ENCODE measurements at regions of chr16 and their contacts with region 1.

Region 1: DNA sequence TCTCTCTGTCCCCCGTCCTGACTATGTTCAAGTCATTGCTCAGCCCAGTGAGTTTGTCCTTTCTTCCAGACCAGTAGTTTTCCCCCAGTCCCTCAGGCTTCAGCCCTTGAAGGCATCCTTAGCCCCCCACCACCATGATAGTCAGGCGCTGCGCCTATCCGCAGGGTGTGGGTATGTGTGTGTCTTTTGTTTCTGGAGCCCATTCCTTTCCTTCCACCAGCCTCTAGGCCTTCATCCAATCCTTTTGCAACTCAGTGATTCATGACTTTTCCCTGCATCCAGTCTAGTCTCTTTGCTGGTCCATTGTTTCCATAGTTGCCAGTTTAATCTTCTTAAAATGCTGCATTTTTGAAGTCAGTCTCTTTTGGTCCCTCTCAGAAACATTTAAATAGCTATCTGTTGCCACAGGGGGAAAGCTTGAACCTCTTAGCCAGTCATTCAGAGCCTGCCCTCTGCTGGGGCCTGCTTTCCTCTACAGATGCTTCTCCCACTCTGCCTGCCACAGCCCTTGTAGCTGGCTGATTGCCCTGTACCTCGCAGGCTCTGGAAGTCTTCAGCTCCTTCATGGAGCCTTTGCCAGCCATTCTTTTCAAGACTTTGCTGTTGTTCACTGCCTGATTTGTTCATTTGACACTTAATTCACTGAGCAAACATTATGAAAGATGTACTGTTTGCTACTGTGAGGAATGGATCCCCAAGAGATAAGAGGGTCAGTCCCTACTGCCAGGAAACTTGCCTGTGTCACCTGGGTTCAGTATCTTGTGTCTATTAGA is 55.9 kb upstream of the ADCY7 start:
- DNase-seq: peak; percentile 84
- H3K4me3 Mint-ChIP-seq: no peak overlapping the region
- H3K27ac Mint-ChIP-seq: no peak overlapping the region
- H3K4me1 Mint-ChIP-seq: peaks cover 29% of the 10 kb centered on the region
- H3K27me3 Mint-ChIP-seq: no peaks in the 10 kb centered on the region

Region 2: DNA sequence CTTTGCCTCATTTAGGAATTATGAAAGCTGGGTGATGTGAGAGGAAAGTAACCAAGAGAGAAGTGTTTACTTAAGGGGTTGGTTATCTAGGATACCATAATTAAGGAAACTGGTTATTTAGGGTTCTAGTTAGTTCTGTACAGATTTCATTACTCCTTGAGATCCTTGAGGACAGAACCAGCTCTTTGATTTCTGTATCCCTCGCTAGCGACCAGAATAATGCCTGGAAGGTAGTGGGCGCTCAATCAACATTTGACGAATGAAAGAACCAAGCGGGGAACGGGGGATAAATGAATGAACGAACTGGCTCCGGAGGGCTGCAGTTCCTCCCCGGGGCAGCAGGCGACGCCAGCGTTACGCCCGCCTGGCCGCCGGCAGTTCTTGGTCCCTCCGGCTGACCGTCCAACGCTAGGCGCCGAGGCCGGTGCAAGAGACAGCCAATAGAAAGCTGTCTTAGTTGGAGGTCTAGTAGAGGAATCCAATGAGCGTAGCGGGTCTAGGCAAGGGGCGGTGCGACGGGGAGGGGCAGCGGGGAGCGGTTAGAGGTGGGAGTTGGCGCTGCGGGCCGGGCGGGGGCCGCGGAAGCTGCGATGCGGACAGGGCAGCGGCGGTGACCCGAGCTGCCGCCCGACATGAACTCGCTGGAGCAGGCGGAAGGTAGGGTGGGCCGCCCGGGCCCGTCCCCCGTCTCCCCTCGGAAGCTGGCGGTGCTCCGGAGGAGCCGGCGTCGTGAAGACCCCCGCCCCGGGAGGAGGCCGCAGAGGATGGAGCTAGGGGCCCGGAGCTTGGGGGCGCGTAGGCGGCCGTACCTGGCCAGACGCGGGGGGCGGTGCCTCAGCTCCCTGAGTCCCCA is 185.5 kb before region 1 on chr16 and contains the start of gene CNEP1R1:
- CTCF ChIA-PET with region 1: interaction called, 133 read pairs
- DNase-seq: peak; percentile 94
- H3K4me3 Mint-ChIP-seq: peak within 1 kb of the TSS; percentile 88
- H3K27ac Mint-ChIP-seq: peak within 1 kb of the TSS; percentile 92
- H3K4me1 Mint-ChIP-seq: peaks cover 24% of the 10 kb centered on the region
- H3K27me3 Mint-ChIP-seq: no peaks in the 10 kb centered on the region

Region 3: GRCh38 chr16:50065624-50066481 is 144.6 kb before region 1 on chr16 and contains the start of gene HEATR3:
- CTCF ChIA-PET with region 1: interaction called, 180 read pairs
- DNase-seq: peak; percentile 95
- H3K4me3 Mint-ChIP-seq: peak within 1 kb of the TSS; percentile 91
- H3K27ac Mint-ChIP-seq: peak within 1 kb of the TSS; percentile 96
- H3K4me1 Mint-ChIP-seq: peaks cover 46% of the 10 kb centered on the region
- H3K27me3 Mint-ChIP-seq: no peaks in the 10 kb centered on the region

Region 4: GRCh38 chr16:50152807-50153452 is 57.5 kb before region 1 on chr16 and contains the start of gene TENT4B:
- CTCF ChIA-PET with region 1: interaction called, 11 read pairs
- DNase-seq: peak; percentile 92
- H3K4me3 Mint-ChIP-seq: peak within 1 kb of the TSS; percentile 84
- H3K27ac Mint-ChIP-seq: peak within 1 kb of the TSS; percentile 96
- H3K4me1 Mint-ChIP-seq: peaks cover 43% of the 10 kb centered on the region
- H3K27me3 Mint-ChIP-seq: no peaks in the 10 kb centered on the region

Region 5: DNA sequence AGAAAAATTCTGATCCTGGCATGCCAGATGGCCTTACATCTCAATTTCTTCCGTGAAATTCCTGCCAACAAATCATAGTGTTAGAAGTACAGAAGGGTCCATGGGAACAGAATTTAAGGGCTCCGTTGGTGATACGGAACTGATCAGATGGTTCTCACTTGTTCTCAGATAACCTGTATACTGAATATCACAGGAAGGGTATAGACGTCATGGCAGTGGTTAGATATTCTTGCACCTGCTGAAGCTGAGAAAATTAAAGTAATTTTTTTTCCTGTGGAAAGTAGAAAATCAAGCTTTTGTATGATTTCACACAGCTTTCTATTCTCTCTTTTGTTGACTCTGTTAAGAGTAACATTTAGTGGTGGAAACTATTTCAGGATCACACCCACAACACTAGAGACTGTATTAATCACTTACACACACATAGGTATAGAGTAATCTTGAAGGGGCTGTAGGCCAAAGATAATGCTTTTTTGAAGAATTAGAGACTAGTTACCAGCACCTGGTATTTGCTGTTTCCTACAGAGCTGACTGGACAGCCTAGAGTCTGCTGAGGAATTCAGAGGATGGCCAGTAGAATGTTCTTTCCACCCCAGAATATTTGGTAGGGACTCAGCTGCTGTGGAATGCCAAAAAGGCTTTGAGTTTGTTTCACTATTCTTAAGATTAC is 49.8 kb before region 1 on chr16:
- CTCF ChIA-PET with region 1: interaction called, 13 read pairs
- DNase-seq: no peak
- H3K4me3 Mint-ChIP-seq: no peak overlapping the region
- H3K27ac Mint-ChIP-seq: peak overlapping the region; percentile 37
- H3K4me1 Mint-ChIP-seq: peaks cover 67% of the 10 kb centered on the region
- H3K27me3 Mint-ChIP-seq: no peaks in the 10 kb centered on the region

Region 6: GRCh38 chr16:50290031-50290775 is 79.8 kb after region 1 on chr16:
- CTCF ChIA-PET with region 1: no interaction called
- DNase-seq: no peak
- H3K4me3 Mint-ChIP-seq: no peak overlapping the region
- H3K27ac Mint-ChIP-seq: peak overlapping the region; percentile 34
- H3K4me1 Mint-ChIP-seq: peaks cover 14% of the 10 kb centered on the region
- H3K27me3 Mint-ChIP-seq: no peaks in the 10 kb centered on the region

Region 7: GRCh38 chr16:50354629-50355456 is 144.4 kb after region 1 on chr16:
- CTCF ChIA-PET with region 1: interaction called, 64 read pairs
- DNase-seq: no peak
- H3K4me3 Mint-ChIP-seq: no peak overlapping the region
- H3K27ac Mint-ChIP-seq: peak overlapping the region; percentile 60
- H3K4me1 Mint-ChIP-seq: peaks cover 22% of the 10 kb centered on the region
- H3K27me3 Mint-ChIP-seq: no peaks in the 10 kb centered on the region

Region 8: DNA sequence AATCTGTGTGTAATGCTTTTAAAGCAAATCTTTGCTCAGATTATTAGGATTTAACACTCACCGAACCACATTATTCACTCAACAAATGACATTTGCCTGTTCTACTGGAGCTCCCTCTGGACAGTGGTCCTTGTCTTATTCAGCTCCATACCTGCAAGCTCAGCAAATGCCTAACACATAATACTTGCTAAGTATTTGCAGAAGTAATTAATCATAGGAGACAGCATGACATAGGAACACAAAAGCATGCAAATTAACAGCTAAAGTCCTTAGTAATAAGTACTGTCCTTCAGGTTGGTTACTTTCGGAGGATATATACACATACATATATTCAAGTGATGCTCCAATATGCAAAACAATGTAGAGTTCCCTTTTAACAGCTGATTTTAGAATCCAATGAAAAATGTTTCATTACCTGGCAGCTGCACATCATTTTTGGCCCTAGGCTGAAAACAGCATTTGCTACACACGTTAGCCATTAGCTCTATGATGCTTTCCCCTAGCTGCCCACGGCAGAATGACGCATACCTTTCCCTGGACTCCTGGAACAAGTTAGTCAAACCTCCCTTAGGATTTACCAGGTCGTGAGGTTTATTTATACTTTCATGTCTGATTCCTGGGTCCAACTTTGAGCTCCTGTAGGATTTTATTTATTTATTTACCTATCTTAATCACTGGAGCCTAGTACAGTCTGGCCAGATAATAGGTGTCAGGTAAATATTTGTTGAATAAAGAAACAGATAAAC is 149.8 kb after region 1 on chr16:
- CTCF ChIA-PET with region 1: interaction called, 64 read pairs
- DNase-seq: no peak
- H3K4me3 Mint-ChIP-seq: no peak overlapping the region
- H3K27ac Mint-ChIP-seq: no peak overlapping the region
- H3K4me1 Mint-ChIP-seq: peaks cover 25% of the 10 kb centered on the region
- H3K27me3 Mint-ChIP-seq: no peaks in the 10 kb centered on the region